PC-9 (cell line): ENCODE measurements at regions of chr7 and their contacts with region 1.

Region 1: GRCh38 chr7:43619213-43620012 is 36.5 kb downstream of the STK17A start:
- DNase-seq: peak in 1 of 2 experiments; percentile 44
- H3K4me3 ChIP-seq: no peak overlapping the region
- H3K27ac ChIP-seq: no peak overlapping the region
- H3K4me1 ChIP-seq: 0 out of 2 replicates have a peak, but pooled peaks cover 5% of the 10 kb centered on the region
- H3K27me3 ChIP-seq: no peaks in the 10 kb centered on the region
- CTCF ChIP-seq: no peak

Region 2: DNA sequence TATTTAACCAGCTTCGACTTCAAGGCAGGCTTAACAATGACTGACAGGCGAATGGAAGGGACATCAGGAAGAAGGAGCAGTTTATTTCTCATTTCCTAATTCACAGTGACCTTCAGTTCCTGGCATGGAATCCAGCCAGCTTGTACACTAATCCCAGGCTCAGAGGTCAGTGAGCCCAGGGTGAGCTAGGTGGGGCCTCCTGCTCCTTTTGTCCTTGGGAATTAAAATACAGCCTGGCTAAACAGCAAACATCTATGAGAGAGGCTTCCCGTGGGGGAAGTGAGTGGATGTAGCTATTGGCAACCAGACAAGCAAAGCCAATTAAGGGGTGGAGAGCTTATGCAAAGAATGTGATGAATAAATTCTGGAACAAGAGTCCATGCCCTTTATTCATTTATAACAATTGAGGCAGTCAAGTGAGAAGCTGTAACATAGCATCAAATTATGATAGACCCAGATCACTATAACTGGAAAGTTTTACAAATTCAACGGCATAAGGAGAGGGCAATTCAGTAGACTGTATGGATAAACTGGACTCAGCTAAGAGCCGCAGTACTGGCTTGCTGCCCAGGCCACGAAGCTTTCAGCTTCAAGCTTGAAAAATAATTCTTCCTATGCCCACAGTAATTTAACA is 20.6 kb after region 1 on chr7:
- CTCF ChIA-PET with region 1: interaction called, 12 read pairs
- POLR2A ChIA-PET with region 1: no interaction called
- intact Hi-C with region 1: no loop called
- DNase-seq: peak in 1 of 2 experiments; percentile 61
- H3K4me3 ChIP-seq: no peak overlapping the region
- H3K27ac ChIP-seq: peak overlapping the region; percentile 29; the same call in 1 of the 2 replicates
- H3K4me1 ChIP-seq: no peaks in the 10 kb centered on the region
- H3K27me3 ChIP-seq: no peaks in the 10 kb centered on the region
- CTCF ChIP-seq: no peak

Region 3: GRCh38 chr7:44431091-44431608 is 811.7 kb after region 1 on chr7:
- CTCF ChIA-PET with region 1: no interaction called
- POLR2A ChIA-PET with region 1: no interaction called
- intact Hi-C with region 1: no loop called
- DNase-seq: no peak
- H3K4me3 ChIP-seq: no peak overlapping the region
- H3K27ac ChIP-seq: no peak overlapping the region
- H3K4me1 ChIP-seq: 0 out of 2 replicates have a peak, but pooled peaks cover 7% of the 10 kb centered on the region
- H3K27me3 ChIP-seq: no peaks in the 10 kb centered on the region
- CTCF ChIP-seq: no peak